HEK293 (cell line): ENCODE measurements at regions of chr2 and their contacts with region 1.

Region 1: DNA sequence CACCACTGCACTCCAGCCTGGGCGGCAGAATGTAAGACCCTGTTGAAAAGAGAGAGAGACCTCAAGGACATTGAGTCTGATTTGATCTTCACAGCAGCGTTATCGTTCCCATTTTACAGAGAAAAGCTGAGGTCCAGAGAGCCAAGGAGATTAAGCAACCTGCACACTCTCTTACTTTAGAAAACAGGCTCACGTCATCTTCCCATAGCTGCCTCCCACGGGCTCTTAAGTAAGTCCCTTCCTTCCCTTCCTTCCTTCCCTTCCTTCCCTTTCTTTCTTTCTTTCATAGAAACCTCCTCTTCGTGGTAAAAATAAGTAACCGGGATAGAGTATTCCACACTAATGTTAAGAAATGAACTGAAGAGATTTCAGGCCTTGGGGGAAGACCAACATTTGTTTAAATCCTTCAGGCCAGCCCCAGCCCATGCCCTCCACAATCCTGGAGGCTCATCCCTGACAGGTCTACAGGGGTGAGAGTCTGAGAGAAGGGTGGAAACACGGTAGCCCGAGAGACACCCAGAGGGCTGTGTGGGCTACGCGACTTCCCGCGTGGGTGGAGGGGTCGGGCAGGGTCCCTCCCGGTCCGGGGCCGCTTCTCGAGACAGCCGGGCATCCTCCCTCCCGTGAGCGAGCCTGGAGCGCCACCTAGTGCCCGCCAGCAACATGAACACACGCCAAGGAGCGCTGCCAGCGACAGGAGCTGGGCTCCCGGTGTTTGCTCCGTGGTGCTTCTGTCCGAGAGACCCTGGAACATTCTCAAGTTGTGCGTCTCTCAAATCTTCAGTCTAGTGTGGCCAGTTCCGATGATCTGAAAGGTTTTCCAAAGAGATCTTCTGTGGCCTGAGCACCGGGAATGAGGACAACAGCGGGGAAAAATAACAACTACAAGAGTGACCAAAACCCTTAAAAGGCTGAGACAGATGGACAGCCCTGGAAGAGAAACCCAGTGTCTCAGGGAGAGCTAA is 160.3 kb downstream of the INO80D start:
- H3K4me3 ChIP-seq: peak overlapping the region; percentile 8; the same call in 1 of the 2 replicates
- H3K27ac ChIP-seq: no peak overlapping the region
- H3K4me1 ChIP-seq: no peaks in the 10 kb centered on the region
- CTCF ChIP-seq: peak; percentile 95

Region 2: GRCh38 chr2:205461678-205462665 is 463.7 kb before region 1 on chr2:
- CTCF ChIA-PET with region 1: no interaction called
- POLR2A ChIA-PET with region 1: no interaction called
- H3K4me3 ChIP-seq: no peak overlapping the region
- H3K27ac ChIP-seq: no peak overlapping the region
- H3K4me1 ChIP-seq: no peaks in the 10 kb centered on the region
- CTCF ChIP-seq: no peak

Region 3: DNA sequence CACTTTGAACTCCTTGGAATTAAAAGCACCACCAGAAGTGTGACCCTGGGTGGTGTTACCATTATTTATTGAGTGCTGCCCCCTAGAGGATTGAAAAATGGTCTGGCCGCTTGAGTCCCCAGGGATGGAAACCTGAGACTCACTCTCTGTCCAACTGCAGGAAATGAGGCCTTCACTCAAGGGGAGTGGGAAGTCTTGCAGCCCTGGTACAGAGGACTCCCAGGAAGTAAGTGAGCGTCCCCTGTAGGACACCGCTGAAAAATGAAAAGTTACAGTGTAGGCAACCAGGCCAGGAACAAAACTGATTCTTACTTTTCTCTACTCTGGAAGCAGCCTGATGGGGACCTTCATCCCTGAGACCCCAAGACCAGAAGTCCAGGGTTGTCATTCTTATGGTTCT is 245.6 kb before region 1 on chr2:
- CTCF ChIA-PET with region 1: interaction called, 10 read pairs
- POLR2A ChIA-PET with region 1: interaction called, 3 read pairs
- H3K4me3 ChIP-seq: no peak overlapping the region
- H3K27ac ChIP-seq: no peak overlapping the region; the same call in 1 of the 2 replicates
- H3K4me1 ChIP-seq: peaks cover 22% of the 10 kb centered on the region
- CTCF ChIP-seq: peak; percentile 83

Region 4: GRCh38 chr2:205776139-205776538 is 149.5 kb before region 1 on chr2:
- CTCF ChIA-PET with region 1: interaction called, 50 read pairs
- POLR2A ChIA-PET with region 1: no interaction called
- H3K4me3 ChIP-seq: no peak overlapping the region
- H3K27ac ChIP-seq: no peak overlapping the region
- H3K4me1 ChIP-seq: peaks cover 3% of the 10 kb centered on the region; the same call in 1 of the 2 replicates
- CTCF ChIP-seq: peak; percentile 64

Region 5: DNA sequence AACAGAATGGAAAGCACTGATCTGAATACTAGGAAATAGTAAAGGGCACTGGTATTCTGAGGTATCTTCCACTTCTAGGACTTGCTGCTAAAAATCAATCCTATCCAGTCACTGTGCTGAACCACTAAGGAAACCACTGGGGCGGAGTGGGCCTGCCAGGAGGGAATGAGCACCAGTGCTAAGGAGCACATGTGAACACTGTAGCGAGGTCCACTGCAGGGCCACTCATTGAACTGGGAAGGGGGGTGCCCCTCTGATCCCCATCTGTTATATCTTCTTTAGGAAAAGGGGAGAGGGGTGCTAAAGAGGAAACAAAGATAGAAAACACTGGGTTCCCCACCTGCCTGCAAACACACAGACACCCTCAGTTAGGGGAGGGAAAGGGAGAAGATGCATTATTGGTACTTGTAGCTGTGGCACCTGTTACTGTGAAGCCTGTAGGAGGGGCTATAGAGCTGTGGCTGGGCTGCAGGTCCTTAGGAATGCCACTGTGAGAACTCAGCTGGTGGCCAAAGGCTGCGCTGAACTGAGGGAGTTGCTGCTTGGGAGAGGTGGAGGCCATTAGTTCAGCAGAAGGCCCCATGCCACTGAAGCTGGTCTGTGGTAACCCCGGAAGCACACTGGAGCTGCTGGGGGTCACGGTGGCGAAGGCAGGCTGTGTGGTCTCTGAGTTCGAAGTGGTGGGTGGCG is 78.5 kb after region 1 on chr2:
- CTCF ChIA-PET with region 1: no interaction called
- POLR2A ChIA-PET with region 1: no interaction called
- H3K4me3 ChIP-seq: no peak overlapping the region
- H3K27ac ChIP-seq: no peak overlapping the region
- H3K4me1 ChIP-seq: no peaks in the 10 kb centered on the region
- CTCF ChIP-seq: no peak

Region 6: DNA sequence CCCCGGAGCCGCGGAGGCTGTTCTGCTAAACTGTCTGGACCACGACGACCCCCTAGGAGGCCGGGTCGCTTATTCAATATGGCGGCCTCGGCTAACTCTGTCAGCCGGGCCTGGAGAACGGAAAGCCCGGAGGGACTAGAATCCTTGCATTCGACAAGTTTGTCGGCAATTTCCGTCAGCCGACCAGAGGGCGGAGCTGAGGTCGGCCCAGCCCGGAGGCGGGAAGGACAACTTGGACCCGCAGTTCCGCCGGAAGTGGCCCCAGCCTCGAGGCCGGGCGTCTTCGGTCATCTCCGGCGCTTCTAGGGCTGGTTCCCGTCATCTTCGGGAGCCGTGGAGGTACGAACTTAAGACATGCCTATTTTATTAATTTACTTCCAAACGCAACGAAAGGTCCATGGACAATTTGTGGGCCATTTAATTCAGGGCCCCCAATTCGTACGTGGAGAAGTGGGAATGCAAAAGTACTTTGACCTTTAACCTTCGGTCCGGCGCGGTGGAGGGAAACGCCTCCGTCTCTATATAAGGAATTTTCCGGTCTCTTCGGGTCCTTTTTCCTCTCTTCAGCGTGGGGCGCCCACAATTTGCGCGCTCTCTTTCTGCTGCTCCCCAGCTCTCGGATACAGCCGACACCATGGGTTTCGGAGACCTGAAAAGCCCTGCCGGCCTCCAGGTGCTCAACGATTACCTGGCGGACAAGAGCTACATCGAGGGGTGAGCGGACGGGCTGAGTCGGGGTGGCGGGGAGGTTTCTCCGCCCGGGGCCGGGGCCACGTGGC is 233.9 kb after region 1 on chr2 and contains the starts of genes EEF1B2 and NDUFS1:
- CTCF ChIA-PET with region 1: no interaction called
- POLR2A ChIA-PET with region 1: no interaction called
- H3K4me3 ChIP-seq: peak within 1 kb of the TSS; percentile 67
- H3K27ac ChIP-seq: peak within 1 kb of the TSS; percentile 80
- H3K4me1 ChIP-seq: no peaks in the 10 kb centered on the region; the same call in 1 of the 2 replicates
- CTCF ChIP-seq: no peak